GM10248 (cell line): ENCODE measurements at regions of chr4 and their contacts with region 1.

Region 1: DNA sequence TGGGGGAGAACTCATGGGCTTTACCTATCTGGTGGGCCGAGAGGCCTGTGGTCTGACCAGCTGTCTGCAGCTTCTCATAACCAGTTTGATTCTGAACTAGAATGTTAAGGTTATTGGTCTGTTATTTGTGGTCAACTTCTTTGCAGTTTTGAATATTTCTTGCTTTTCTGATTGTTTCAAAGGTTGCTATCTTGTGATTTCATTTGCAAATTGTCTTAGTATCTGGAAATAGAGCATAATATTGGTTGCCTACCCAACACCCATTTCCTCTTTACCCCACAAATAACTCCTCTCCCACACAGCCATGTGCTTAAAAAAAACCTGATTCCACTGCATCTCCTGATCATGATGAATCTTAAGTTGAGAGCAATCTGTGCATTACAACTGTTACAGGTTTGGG is 39.1 kb upstream of the BMP2K start:
- DNase-seq: peak; percentile 15
- CTCF ChIP-seq: no peak

Region 2: GRCh38 chr4:78747475-78747922 is 10.5 kb after region 1 on chr4:
- CTCF ChIA-PET with region 1: interaction called, 17 read pairs
- POLR2A ChIA-PET with region 1: no interaction called
- DNase-seq: no peak
- CTCF ChIP-seq: no peak

Region 3: GRCh38 chr4:79209822-79210635 is 473.0 kb after region 1 on chr4:
- CTCF ChIA-PET with region 1: no interaction called
- POLR2A ChIA-PET with region 1: no interaction called
- DNase-seq: no peak
- CTCF ChIP-seq: no peak